ENCODE measurements at regions of chr14 and their contacts with region 1.

Region 1: GRCh38 chr14:65915125-65915524 is 502.6 kb downstream of the FUT8 start:
- DNase-seq: no peak
- H3K4me3 Mint-ChIP-seq: no peak overlapping the region
- H3K27ac Mint-ChIP-seq: no peak overlapping the region
- H3K4me1 Mint-ChIP-seq: peaks cover 54% of the 10 kb centered on the region
- H3K27me3 Mint-ChIP-seq: peaks cover 7% of the 10 kb centered on the region

Region 2: GRCh38 chr14:65900164-65900563 is 15.0 kb before region 1 on chr14:
- intact Hi-C with region 1: loop called (anchors 2 kb)
- DNase-seq: no peak
- H3K4me3 Mint-ChIP-seq: no peak overlapping the region
- H3K27ac Mint-ChIP-seq: no peak overlapping the region
- H3K4me1 Mint-ChIP-seq: peaks cover 4% of the 10 kb centered on the region
- H3K27me3 Mint-ChIP-seq: peaks cover 5% of the 10 kb centered on the region

Region 3: GRCh38 chr14:65927931-65928356 is 12.8 kb after region 1 on chr14:
- intact Hi-C with region 1: loop called (anchors 1 kb)
- DNase-seq: peak; percentile 82
- H3K4me3 Mint-ChIP-seq: peak overlapping the region; percentile 50
- H3K27ac Mint-ChIP-seq: peak overlapping the region; percentile 86
- H3K4me1 Mint-ChIP-seq: peaks cover 60% of the 10 kb centered on the region
- H3K27me3 Mint-ChIP-seq: peaks cover 4% of the 10 kb centered on the region